H1 (cell line): ENCODE measurements at regions of chr2 and their contacts with region 1.

Region 1: DNA sequence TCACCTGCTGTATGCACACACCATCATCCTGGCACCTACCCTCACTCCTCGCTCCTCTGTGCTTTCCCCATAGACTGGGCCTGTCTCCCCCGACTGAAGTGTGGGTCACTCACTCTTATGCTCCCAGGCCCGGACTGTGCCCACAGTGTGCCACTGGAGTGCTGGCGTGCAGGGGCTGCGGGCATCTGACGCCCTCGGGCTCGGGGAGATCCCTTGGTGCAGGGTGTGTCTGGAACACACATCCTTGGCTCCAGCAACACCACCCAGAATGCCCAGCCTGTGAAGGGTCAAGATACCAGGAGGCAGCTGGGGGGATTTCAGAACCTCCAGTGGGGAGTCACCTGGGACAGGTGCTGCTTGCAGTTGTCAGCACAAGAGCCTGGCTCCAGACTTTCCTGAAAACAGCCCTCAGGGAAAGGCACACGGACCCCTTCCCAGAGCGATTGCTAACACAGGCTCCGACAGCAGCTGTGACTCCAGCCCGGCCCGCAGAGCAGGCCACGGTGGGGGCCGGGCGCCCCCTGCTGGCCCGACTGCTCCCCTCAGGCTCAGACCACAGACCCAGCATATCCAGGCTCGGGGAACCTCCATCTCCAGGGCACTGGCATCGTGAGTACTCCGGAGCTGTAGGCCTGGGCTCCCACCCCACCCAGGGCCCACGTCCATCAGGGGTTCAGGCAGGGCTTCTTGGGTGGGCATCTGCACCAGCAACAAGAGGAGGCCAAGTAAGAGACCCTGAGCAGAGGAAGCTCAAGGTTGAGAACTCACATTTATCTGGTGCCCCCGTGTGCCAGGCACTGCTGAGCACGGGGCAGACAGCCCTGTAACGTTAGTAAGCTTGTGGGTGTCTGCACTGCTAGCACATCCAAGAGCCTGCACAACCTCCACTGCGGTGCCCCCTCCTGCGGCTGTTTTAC is 8.6 kb downstream of the HS1BP3 start:
- DNase-seq: peak; percentile 50 to 91
- H3K4me3 ChIP-seq: no peak overlapping the region
- H3K27ac ChIP-seq: no peak overlapping the region
- H3K4me1 ChIP-seq: no peaks in the 10 kb centered on the region
- H3K27me3 ChIP-seq: no peaks in the 10 kb centered on the region
- CTCF ChIP-seq: peak in 2 of 3 experiments; percentile 95; a peak in 3 of 4 replicates
- EP300 ChIP-seq: no peak
- POLR2A ChIP-seq: no peak
- RAD21 ChIP-seq: peak; percentile 93 to 95

Region 2: GRCh38 chr2:20384953-20385352 is 257.4 kb before region 1 on chr2:
- CTCF ChIA-PET with region 1: interaction called, 152 read pairs
- POLR2A ChIA-PET with region 1: no interaction called
- DNase-seq: no peak
- H3K4me3 ChIP-seq: no peak overlapping the region
- H3K27ac ChIP-seq: no peak overlapping the region
- H3K4me1 ChIP-seq: peaks cover 0 to 4% (median 0%) of the 10 kb centered on the region in 4 experiments; a peak in 2 of 7 replicates
- H3K27me3 ChIP-seq: no peaks in the 10 kb centered on the region
- CTCF ChIP-seq: no peak
- EP300 ChIP-seq: no peak
- POLR2A ChIP-seq: no peak
- RAD21 ChIP-seq: no peak

Region 3: DNA sequence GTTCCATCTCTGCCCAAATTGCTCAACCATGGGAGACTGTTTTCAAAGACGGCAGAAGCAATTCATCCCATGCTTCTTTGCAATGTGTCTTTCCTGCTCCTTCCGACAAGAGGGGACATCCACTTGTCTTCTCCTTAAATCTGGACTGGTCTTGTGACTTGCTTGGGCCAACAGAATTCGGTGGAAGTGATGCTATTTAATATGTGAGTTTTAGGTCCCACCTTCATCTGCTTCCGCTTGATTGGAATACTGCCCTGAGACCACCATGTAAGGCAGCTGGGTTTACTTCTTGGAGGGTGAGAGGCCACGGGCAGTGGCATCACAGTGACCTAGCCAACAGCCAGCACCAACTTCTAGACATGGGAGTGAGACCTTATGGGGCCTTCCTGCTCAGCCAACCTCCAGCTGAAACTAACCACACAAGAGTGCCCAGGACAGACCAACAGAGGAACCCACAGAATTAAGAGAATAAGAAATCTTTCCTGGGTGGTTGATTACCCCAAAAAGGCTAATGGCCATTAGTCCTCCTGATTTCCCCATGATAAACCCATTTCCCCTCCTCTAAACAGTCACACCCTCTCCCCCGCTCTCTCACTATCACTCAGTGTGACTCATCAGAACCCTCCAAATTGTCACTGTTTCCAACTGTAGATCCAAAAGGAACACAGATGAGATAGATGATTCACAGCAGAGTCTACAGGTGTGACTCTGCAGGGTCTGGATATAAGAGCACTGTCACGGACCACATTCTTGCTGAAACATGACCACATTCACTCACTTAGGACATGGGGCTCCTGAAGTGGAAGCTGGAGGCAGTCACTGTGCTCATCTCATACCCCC is 211.6 kb before region 1 on chr2:
- CTCF ChIA-PET with region 1: interaction called, 261 read pairs
- POLR2A ChIA-PET with region 1: no interaction called
- DNase-seq: no peak
- H3K4me3 ChIP-seq: no peak overlapping the region
- H3K27ac ChIP-seq: no peak overlapping the region
- H3K4me1 ChIP-seq: no peaks in the 10 kb centered on the region
- H3K27me3 ChIP-seq: no peaks in the 10 kb centered on the region
- CTCF ChIP-seq: no peak
- EP300 ChIP-seq: no peak
- POLR2A ChIP-seq: no peak
- RAD21 ChIP-seq: no peak

Region 4: DNA sequence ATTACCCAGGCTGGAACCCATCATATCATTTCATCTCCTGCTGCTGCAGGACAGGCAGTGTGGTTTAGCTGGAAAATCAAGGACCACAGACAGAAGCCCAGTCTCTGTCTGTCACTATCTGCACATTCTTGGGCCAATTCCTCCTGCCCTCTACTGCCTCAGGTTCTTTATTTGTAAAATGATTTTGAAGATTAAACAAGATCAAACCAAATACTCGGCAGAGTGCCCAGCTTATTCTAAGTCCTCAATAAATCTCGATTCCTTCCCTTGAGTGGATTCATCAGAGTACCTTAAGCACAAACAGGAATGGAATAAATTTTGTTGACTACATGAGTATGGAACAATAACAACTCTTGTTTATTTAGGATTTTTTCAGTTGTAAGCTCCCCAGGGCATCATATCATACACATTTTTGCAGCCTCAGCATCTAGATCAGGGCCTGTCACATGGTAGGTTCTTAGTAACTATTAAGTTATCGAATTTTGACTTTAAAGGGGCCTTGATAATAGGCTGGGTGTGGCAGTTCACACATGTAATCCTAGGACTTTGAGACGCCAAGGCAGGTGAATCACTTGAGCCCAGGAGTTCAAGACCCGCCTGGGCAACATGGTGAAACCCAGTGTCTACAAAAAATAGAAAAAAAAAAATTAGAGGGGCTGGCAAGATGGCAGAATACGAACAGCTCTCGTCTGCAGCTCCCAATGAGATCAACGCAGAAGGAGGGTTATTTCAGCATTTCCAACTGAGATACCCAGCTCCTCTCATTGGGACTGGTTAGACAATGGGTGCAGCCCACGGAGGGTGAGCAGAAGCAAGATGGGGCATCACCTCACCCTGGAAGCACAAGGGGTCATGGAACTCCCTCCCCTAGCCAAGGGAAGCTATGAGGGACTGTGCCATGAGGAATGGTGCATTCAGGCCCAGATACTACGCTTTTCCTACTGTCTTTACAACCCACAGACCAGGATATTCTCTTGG is 184.4 kb before region 1 on chr2:
- CTCF ChIA-PET with region 1: interaction called, 367 read pairs
- POLR2A ChIA-PET with region 1: no interaction called
- DNase-seq: no peak
- H3K4me3 ChIP-seq: no peak overlapping the region
- H3K27ac ChIP-seq: no peak overlapping the region
- H3K4me1 ChIP-seq: no peaks in the 10 kb centered on the region
- H3K27me3 ChIP-seq: no peaks in the 10 kb centered on the region
- CTCF ChIP-seq: no peak
- EP300 ChIP-seq: no peak
- POLR2A ChIP-seq: no peak
- RAD21 ChIP-seq: no peak

Region 5: GRCh38 chr2:20600756-20601325 is 41.5 kb before region 1 on chr2:
- CTCF ChIA-PET with region 1: interaction called, 17 read pairs
- POLR2A ChIA-PET with region 1: no interaction called
- DNase-seq: no peak
- H3K4me3 ChIP-seq: no peak overlapping the region
- H3K27ac ChIP-seq: no peak overlapping the region
- H3K4me1 ChIP-seq: peaks cover 0 to 1% (median 0%) of the 10 kb centered on the region in 4 experiments; a peak in 3 of 7 replicates
- H3K27me3 ChIP-seq: no peaks in the 10 kb centered on the region
- CTCF ChIP-seq: peak in 2 of 3 experiments; percentile 18 to 25; a peak in 2 of 4 replicates
- EP300 ChIP-seq: no peak
- POLR2A ChIP-seq: no peak
- RAD21 ChIP-seq: peak in 1 of 2 experiments; percentile 25; a peak in 2 of 4 replicates